Posterior cingulate gyrus (tissue), 11 donors: ENCODE measurements at regions of chr21 and their contacts with region 1.

Region 1: GRCh38 chr21:32155226-32155625 is 123.6 kb downstream of the MIS18A start:
- DNase-seq: no peak

Region 2: DNA sequence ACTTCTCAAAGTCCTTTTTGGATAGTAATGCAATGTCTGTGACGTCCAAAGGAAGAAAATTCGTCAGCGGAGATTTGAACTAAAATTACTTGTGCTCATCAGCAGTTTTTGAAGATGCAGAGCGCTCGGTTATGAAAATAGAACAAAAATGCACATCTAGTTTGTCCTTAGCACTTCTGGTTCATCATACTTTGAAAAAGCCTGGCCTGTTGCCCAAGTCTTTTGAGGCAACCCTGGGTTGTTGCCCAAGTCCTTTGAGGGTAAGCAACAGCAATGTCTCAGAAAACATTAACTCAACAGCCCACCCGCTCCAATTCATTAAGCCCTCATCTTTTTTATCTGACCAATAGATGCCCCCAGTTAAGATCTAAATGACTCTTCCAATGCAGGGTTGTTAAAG is 190.5 kb before region 1 on chr21:
- intact Hi-C with region 1: no loop called
- DNase-seq: no peak

Region 3: DNA sequence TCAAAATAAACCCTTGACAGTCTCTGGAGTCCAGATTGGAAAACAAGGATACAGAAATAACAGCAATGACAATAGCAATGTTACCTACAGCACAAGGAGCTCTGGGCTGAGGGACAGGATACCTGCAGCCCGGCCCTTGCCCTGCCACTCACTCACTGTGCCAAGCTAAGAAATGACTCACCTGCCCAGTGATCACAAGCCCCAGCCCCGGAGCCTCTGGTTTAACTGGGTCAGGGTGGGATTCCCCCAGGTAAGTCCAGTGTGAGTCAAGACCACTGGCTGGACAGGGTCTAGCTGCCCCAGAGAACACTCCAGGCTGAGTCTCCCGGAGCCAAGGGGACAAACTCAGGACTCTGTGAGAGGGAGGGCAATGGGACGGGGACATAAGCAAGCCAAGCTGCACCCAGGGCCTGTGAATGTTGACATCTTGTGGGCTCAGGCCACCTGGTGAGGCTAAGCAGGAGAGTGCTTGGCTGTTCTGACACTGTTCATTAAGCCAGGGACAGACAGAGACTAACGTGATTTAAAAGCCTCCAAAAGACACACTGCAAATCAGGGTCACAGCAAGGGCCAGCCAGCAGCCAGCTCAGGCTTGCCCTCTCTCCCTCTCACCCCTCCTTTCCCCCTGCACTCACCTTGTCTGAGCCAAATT is 59.6 kb after region 1 on chr21:
- intact Hi-C with region 1: loop called (anchors 10 kb)
- DNase-seq: no peak